ENCODE measurements at regions of chr3 and their contacts with region 1.

Region 1: DNA sequence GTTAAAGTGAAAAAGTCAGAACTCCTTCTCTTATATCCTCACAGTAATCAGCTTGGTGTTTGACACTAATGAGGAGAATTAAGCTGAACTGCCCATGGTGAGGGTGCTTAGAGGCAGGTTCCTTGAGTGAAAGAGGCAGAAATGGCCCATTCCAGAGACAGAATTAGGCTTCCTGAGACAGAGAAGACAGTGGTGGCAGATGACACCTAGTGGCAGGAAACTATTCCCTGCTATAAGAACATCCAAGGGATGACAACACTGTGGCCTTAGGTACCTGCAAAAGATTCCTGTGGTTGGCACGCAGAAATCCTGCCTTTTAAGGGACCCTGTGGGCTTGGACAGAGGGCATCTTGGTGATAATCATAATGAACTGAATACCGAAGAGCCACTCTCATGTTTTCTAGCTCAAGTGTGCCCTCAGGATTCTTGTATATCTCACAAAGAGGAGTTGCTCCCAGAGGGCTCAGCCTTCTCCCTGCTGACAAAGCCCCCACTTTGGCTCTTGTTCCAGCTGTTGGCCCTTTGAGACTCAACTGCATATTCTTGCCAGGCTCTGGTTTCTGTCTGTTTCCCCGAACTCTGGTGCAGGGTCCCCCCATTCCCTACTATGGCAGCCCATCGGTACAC is 56.0 kb downstream of the KBTBD12 start:
- DNase-seq: peak; percentile 66
- H3K4me3 Mint-ChIP-seq: no peak overlapping the region
- H3K27ac Mint-ChIP-seq: no peak overlapping the region
- H3K4me1 Mint-ChIP-seq: no peaks in the 10 kb centered on the region
- H3K27me3 Mint-ChIP-seq: peaks cover 45% of the 10 kb centered on the region
- CTCF ChIP-seq: peak; percentile 70

Region 2: GRCh38 chr3:127574880-127575878 is 395.9 kb before region 1 on chr3:
- CTCF ChIA-PET with region 1: interaction called, 10 read pairs
- POLR2A ChIA-PET with region 1: no interaction called
- intact Hi-C with region 1: loop called (anchors 1 kb)
- DNase-seq: peak; percentile 91
- H3K4me3 Mint-ChIP-seq: no peak overlapping the region
- H3K27ac Mint-ChIP-seq: peak overlapping the region; percentile 23
- H3K4me1 Mint-ChIP-seq: peaks cover 6% of the 10 kb centered on the region
- H3K27me3 Mint-ChIP-seq: no peaks in the 10 kb centered on the region
- CTCF ChIP-seq: peak; percentile 96

Region 3: GRCh38 chr3:127690823-127691452 is 280.1 kb before region 1 on chr3:
- CTCF ChIA-PET with region 1: interaction called, 22 read pairs
- POLR2A ChIA-PET with region 1: no interaction called
- intact Hi-C with region 1: loop called (anchors 1 kb)
- DNase-seq: peak; percentile 69
- H3K4me3 Mint-ChIP-seq: no peak overlapping the region
- H3K27ac Mint-ChIP-seq: peak overlapping the region; percentile 46
- H3K4me1 Mint-ChIP-seq: peaks cover 5% of the 10 kb centered on the region
- H3K27me3 Mint-ChIP-seq: no peaks in the 10 kb centered on the region
- CTCF ChIP-seq: peak; percentile 67

Region 4: DNA sequence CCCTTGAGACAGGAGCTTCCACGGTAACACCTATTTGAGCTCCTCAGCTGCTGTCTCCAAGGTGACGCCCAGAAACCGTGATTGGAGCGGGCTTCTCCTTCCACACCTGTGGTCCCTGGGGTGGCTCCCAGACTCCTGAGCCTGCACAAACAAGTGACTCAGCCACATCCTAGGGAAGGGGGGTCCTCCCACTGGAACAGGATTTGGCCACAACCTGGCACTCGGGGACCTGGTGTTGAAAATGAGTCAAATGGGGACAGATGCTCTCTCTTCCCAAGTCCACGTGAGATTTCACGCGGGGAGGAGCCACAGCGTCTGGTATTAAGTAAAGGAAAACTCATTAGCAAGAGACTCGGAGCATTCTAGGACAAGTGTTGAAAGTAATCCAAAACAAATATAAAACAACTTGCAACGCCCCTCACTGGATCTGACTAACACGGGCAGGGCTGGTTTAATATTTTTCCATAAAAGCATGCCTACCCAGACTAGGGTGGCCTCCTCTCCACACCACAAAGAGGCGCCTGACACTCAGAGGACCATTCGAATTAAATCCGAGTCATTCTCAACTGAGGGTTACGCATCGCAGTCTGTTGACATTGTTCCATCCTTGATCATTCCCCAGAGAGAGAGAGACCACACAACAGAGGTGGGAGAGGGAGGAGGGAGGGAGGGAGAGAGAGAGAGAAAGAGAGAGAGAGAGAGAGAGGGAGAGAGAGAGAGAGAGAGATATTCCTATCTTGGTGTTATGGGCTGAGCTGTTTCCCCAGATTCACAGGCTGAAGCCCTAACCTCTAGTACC is 223.2 kb before region 1 on chr3:
- CTCF ChIA-PET with region 1: no interaction called
- POLR2A ChIA-PET with region 1: no interaction called
- intact Hi-C with region 1: loop called (anchors 2 kb)
- DNase-seq: peak; percentile 78
- H3K4me3 Mint-ChIP-seq: peak overlapping the region; percentile 11
- H3K27ac Mint-ChIP-seq: peak overlapping the region; percentile 49
- H3K4me1 Mint-ChIP-seq: peaks cover 46% of the 10 kb centered on the region
- H3K27me3 Mint-ChIP-seq: no peaks in the 10 kb centered on the region
- CTCF ChIP-seq: no peak

Region 5: DNA sequence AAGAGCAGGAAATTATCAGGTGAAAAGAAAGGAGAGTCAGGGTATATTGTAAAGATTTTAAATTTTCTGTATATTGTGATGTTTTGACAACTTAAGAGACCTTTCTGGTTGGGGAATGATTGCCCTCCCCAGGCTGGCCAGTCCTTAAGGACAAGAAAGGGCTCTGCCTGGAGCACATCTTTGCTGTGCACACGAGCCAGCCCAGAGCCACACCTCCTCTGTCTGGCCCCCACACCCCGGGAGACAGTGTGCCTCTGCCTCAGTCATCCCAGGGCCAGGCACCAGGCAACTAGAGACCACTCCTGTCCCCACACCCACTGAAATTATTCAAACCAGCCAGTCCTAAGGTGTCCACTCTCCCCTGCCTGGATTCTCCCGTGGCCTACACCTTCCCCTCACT is 11.1 kb after region 1 on chr3:
- CTCF ChIA-PET with region 1: interaction called, 10 read pairs
- POLR2A ChIA-PET with region 1: no interaction called
- intact Hi-C with region 1: no loop called
- DNase-seq: no peak
- H3K4me3 Mint-ChIP-seq: no peak overlapping the region
- H3K27ac Mint-ChIP-seq: no peak overlapping the region
- H3K4me1 Mint-ChIP-seq: no peaks in the 10 kb centered on the region
- H3K27me3 Mint-ChIP-seq: peaks cover 5% of the 10 kb centered on the region
- CTCF ChIP-seq: no peak